ENCODE measurements at regions of chr3 and their contacts with region 1.

Region 1: DNA sequence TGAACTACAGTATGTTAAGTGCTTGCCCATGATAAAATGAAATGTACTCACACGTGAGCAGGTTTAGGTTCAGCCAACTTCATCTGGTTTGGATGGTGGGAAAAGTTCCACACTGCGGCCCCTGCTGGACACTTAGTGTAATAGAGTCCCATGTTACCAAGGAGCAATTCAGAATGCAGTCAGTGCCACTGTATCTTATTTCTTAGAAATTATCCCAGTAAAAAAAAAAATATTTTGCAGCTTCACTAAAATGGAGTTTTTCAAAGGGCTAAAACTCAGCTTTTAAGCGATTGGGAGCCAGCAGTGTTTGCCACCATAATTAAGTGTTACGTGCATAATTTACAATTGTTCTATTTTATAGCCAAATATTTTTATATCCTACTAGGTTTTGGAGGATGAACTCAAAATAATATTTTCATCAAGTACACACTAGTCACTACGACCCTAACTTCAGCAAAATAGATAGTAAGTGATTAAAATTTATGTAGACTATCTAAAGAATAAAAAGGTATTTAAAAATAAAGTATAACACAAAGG is 371.7 kb upstream of the GBE1 start:
- DNase-seq: peak in 5 of 9 donors; percentile 22 to 35 (median 27)
- ATAC-seq: peak; percentile 67
- H3K4me3 ChIP-seq: no peak overlapping the region
- H3K4me3 Mint-ChIP-seq: no peak overlapping the region
- H3K27ac ChIP-seq: no peak overlapping the region
- H3K27ac Mint-ChIP-seq: no peak overlapping the region
- H3K4me1 ChIP-seq: no peaks in the 10 kb centered on the region
- H3K4me1 Mint-ChIP-seq: peaks cover 0 to 2% (median 0%) of the 10 kb centered on the region in 7 donors
- H3K27me3 ChIP-seq: no peaks in the 10 kb centered on the region
- H3K27me3 Mint-ChIP-seq: peaks cover 0 to 9% (median 0%) of the 10 kb centered on the region in 5 donors

Region 2: DNA sequence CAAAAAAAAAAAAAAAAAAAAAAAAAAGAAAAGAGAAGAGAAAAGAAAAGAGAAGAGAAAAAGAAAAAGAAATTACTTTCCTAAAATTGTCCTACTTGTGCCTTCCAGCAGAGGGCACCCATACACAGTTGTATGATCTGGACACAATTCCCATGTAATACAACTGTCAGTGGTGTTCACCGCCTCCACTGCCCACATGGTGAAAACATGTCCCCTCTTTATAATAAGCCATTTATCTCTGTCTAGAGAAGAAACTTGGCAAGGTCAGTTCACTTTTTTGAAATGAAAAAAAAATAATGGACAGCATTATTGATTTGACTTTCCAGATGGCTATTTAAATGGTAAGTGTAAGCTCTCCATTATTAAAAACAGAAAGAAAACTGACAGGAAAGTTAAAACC is 831.1 kb before region 1 on chr3:
- CTCF ChIA-PET with region 1: no interaction called
- POLR2A ChIA-PET with region 1: no interaction called
- intact Hi-C with region 1: loop called in 1 of 2 experiments (anchors 5 kb)
- DNase-seq: no peak
- ATAC-seq: no peak
- H3K4me3 ChIP-seq: no peak overlapping the region
- H3K4me3 Mint-ChIP-seq: no peak overlapping the region
- H3K27ac ChIP-seq: no peak overlapping the region
- H3K27ac Mint-ChIP-seq: no peak overlapping the region
- H3K4me1 ChIP-seq: no peaks in the 10 kb centered on the region
- H3K4me1 Mint-ChIP-seq: no peaks in the 10 kb centered on the region
- H3K27me3 ChIP-seq: no peaks in the 10 kb centered on the region
- H3K27me3 Mint-ChIP-seq: no peaks in the 10 kb centered on the region

Region 3: GRCh38 chr3:81419228-81419627 is 713.9 kb before region 1 on chr3:
- CTCF ChIA-PET with region 1: no interaction called
- POLR2A ChIA-PET with region 1: no interaction called
- intact Hi-C with region 1: loop called (anchors 1 to 5 kb)
- DNase-seq: no peak
- ATAC-seq: no peak
- H3K4me3 ChIP-seq: no peak overlapping the region
- H3K4me3 Mint-ChIP-seq: no peak overlapping the region
- H3K27ac ChIP-seq: no peak overlapping the region
- H3K27ac Mint-ChIP-seq: no peak overlapping the region
- H3K4me1 ChIP-seq: no peaks in the 10 kb centered on the region
- H3K4me1 Mint-ChIP-seq: no peaks in the 10 kb centered on the region
- H3K27me3 ChIP-seq: no peaks in the 10 kb centered on the region
- H3K27me3 Mint-ChIP-seq: no peaks in the 10 kb centered on the region

Region 4: DNA sequence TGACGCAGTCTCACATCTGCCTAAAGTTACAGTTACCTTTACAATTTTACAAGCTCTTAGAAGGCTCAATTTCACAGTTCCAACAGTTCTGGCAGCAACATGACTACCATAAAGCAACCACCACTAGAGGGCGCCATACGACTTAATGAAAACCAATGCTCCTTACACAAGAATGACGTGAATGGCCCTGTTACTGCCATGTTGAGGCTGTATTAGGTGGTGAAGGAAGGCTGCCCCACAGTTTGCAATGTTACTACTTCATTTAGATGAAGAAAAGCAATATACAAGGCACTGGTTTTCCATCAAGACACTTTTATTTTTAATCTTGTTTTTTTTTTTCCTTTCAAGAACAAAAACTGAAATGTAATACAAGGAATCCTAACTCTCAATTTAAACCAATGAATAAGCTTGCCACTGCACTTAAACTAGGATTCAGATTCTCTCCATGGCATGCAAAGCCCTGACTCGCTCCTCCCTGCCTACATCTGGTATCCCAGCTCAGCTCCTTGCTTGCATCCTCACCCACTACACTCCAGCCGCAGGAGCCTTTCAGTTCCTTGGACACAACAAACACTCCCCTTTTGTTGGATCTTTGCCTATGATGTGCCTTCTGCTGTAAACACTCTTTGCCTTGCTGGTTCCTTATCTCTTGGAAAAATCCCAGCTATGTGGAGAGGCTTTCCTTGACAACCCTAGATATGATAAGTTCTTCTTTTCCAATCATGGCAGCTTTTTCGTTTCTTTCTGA is 642.4 kb before region 1 on chr3:
- CTCF ChIA-PET with region 1: interaction called, 4 read pairs
- POLR2A ChIA-PET with region 1: no interaction called
- intact Hi-C with region 1: loop called in 1 of 2 experiments (anchors 1 kb)
- DNase-seq: peak; percentile 12 to 63 (median 45)
- ATAC-seq: peak; percentile 89
- H3K4me3 ChIP-seq: no peak overlapping the region
- H3K4me3 Mint-ChIP-seq: no peak overlapping the region
- H3K27ac ChIP-seq: no peak overlapping the region
- H3K27ac Mint-ChIP-seq: no peak overlapping the region
- H3K4me1 ChIP-seq: no peaks in the 10 kb centered on the region
- H3K4me1 Mint-ChIP-seq: peaks cover 0 to 5% (median 0%) of the 10 kb centered on the region in 7 donors
- H3K27me3 ChIP-seq: no peaks in the 10 kb centered on the region
- H3K27me3 Mint-ChIP-seq: no peaks in the 10 kb centered on the region

Region 5: DNA sequence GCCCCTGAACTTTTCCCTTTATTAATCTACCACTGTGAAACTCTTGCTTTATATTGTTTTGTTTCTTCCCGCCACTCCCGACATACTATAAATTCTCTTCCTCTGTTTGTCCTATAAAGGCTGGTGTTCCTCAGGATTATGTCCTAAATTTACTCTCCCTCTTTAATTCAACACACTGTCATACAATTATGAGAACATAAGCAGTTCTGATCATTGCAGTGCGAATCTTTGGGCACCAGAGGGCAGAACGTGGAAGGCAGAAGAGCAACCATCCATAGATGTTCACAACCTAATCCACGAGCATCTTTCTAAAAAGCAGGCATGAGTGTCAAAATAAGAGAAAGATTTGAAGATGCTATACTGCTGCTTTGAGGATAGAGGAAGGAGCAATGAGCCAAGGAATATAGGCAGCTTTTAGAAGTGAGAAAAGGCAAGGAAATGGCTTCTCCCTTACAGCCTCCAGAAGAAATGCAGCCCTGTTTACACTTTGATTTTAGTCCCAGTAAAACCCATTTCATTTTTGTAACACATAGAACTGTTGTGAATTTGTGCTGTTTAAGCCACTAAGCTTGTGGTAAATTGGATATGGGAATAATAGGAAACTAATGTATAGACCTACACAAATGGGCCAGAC is 551.1 kb before region 1 on chr3:
- CTCF ChIA-PET with region 1: no interaction called
- POLR2A ChIA-PET with region 1: no interaction called
- intact Hi-C with region 1: loop called (anchors 1 to 2 kb)
- DNase-seq: peak in 1 of 9 donors; percentile 3
- ATAC-seq: no peak
- H3K4me3 ChIP-seq: no peak overlapping the region
- H3K4me3 Mint-ChIP-seq: no peak overlapping the region
- H3K27ac ChIP-seq: no peak overlapping the region
- H3K27ac Mint-ChIP-seq: no peak overlapping the region
- H3K4me1 ChIP-seq: no peaks in the 10 kb centered on the region
- H3K4me1 Mint-ChIP-seq: no peaks in the 10 kb centered on the region
- H3K27me3 ChIP-seq: no peaks in the 10 kb centered on the region
- H3K27me3 Mint-ChIP-seq: no peaks in the 10 kb centered on the region

Region 6: DNA sequence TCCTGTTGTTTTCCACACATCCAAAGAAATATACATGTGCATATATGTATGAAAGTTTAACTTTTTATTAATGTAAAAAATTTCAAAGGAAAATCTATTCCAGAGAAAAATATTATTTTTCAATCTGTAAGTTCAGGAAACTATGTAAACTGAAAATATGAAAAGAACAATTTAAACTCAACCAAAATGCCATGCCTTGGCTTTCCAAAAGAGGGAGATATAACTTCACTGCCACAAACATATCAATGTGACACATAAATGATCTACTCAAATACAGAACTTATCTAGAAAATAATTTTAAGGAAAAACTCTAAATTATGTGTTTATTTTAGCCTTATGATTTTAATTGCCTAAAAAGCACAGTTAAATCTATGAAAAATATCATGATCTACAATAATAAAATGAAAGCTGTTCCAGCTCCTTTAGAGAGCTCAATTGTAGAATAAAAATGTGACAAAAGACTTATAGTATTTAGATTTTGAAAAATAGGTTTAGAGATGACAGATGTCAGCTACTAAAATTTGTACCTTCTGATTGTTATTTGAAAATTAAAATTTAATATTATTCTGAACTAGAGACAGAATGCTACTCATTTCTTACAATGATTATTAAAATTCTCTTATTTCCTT is 466.5 kb before region 1 on chr3:
- CTCF ChIA-PET with region 1: interaction called, 7 read pairs
- POLR2A ChIA-PET with region 1: no interaction called
- intact Hi-C with region 1: loop called (anchors 1 kb)
- DNase-seq: peak in 5 of 9 donors; percentile 1 to 9 (median 3)
- ATAC-seq: no peak
- H3K4me3 ChIP-seq: no peak overlapping the region
- H3K4me3 Mint-ChIP-seq: no peak overlapping the region
- H3K27ac ChIP-seq: no peak overlapping the region
- H3K27ac Mint-ChIP-seq: no peak overlapping the region
- H3K4me1 ChIP-seq: no peaks in the 10 kb centered on the region
- H3K4me1 Mint-ChIP-seq: peaks cover 0 to 2% (median 0%) of the 10 kb centered on the region in 7 donors
- H3K27me3 ChIP-seq: no peaks in the 10 kb centered on the region
- H3K27me3 Mint-ChIP-seq: no peaks in the 10 kb centered on the region